ENCODE measurements at regions of chr5 and their contacts with region 1.

Region 1: GRCh38 chr5:138223532-138223931 is 10.4 kb upstream of the CDC23 start:
- DNase-seq: no peak
- CTCF ChIP-seq: no peak

Region 2: DNA sequence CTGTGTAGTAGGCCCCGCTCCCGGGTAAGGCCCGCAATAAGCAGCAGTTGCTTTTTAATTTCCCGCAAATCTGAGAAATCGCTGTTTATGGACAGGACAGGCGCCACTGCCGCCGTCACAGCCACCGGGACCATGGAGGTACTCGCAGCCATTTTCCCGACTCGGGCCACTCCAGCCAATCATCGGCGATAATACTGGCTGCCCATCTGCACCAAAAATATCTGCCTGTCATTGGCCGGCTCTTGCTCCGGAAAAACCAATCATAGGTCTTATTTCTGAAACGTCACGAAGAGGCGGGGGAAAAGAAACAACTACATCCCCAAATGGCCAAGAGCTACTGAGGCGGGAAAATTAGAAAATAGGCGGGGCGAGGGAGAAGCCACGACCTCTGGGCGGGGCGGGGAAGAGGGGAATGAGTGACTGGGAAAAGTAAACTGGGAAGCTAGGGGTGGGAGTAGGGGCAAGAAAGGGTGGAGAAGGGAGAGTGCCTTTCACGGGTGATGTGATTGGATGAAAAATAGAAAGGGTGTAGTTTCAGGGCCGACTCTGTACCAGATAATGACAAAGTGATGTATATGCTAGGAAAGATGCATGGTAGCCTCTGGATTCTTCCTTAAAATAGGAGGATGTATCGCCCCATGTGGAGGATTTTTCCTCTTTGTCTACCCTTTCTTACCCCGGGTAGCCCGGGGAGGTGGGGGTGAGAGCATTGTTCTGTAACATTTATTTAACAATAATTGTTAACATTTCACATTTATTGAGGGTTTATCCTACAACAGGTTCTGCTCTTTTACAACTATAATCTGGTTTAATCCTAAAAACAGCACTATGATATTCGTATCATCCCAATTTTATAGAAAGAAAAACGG is 10.1 kb before region 1 on chr5 and contains the start of gene CDC23:
- CTCF ChIA-PET with region 1: interaction called, 16 read pairs
- POLR2A ChIA-PET with region 1: no interaction called
- DNase-seq: peak; percentile 98
- CTCF ChIP-seq: no peak

Region 3: GRCh38 chr5:138241688-138242571 is 18.4 kb after region 1 on chr5:
- CTCF ChIA-PET with region 1: interaction called, 61 read pairs
- POLR2A ChIA-PET with region 1: no interaction called
- DNase-seq: peak; percentile 37
- CTCF ChIP-seq: no peak

Region 4: GRCh38 chr5:139844472-139845145 is 1621.1 kb after region 1 on chr5:
- CTCF ChIA-PET with region 1: no interaction called
- POLR2A ChIA-PET with region 1: no interaction called
- DNase-seq: peak; percentile 84
- CTCF ChIP-seq: peak; percentile 89

Measured in GM10248 (cell line).